ENCODE measurements at regions of chrX and their contacts with region 1.

Region 1: GRCh38 chrX:19682712-19683331 is 167.5 kb upstream of the MAP3K15 start:
- DNase-seq: peak; percentile 83 to 92 (median 85)
- H3K4me3 ChIP-seq: no peak overlapping the region
- H3K4me3 Mint-ChIP-seq: peak overlapping the region; percentile 12 to 75 (median 59)
- H3K27ac ChIP-seq: peak overlapping the region; percentile 92
- H3K27ac Mint-ChIP-seq: peak overlapping the region; percentile 95 to 100 (median 98)
- H3K4me1 ChIP-seq: peaks cover 89% of the 10 kb centered on the region
- H3K4me1 Mint-ChIP-seq: peaks cover 55 to 84% (median 72%) of the 10 kb centered on the region in 4 donors
- H3K27me3 ChIP-seq: no peaks in the 10 kb centered on the region
- H3K27me3 Mint-ChIP-seq: no peaks in the 10 kb centered on the region

Region 2: DNA sequence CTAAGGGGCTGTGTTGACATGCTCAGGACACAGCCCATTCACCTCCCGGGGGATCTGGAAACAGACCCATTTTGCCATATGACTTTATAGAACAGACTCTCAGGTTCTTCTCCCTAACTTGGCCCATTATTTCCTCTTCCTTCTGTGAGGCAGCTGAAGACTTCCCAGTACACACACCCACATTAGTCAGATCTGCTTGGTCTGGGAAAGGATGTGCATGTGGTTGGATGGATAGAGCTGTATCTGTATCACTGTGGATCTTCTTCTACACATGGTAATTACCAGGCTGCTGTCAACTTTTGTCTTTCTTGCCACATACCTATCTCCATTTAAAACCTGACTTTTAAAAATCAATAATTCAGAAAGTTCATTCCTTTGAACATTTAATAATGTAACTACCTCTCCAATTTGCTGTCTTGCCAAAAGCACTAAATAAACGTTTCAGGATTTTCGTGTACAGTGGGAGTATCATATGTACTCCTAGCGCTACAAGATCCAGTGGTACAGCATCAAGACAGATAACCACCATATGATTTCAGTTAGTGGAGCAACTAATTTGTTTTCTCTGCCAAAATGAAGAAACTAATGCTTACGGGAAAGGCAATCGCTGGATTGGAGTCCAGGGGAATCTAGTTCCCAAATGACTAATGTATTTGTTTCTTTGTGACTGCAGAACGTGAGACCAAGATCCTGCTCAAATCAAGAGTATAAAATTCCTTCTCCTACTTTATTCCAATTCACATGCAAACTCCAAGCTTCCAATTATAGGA is 33.4 kb before region 1 on chrX:
- CTCF ChIA-PET with region 1: no interaction called
- POLR2A ChIA-PET with region 1: no interaction called
- intact Hi-C with region 1: loop called (anchors 5 kb)
- DNase-seq: no peak
- H3K4me3 ChIP-seq: no peak overlapping the region
- H3K4me3 Mint-ChIP-seq: no peak overlapping the region
- H3K27ac ChIP-seq: no peak overlapping the region
- H3K27ac Mint-ChIP-seq: peak overlapping the region in 6 of 7 donors; percentile 10 to 90 (median 65)
- H3K4me1 ChIP-seq: peaks cover 21% of the 10 kb centered on the region
- H3K4me1 Mint-ChIP-seq: peaks cover 40 to 83% (median 64%) of the 10 kb centered on the region in 4 donors
- H3K27me3 ChIP-seq: no peaks in the 10 kb centered on the region
- H3K27me3 Mint-ChIP-seq: no peaks in the 10 kb centered on the region

Region 3: DNA sequence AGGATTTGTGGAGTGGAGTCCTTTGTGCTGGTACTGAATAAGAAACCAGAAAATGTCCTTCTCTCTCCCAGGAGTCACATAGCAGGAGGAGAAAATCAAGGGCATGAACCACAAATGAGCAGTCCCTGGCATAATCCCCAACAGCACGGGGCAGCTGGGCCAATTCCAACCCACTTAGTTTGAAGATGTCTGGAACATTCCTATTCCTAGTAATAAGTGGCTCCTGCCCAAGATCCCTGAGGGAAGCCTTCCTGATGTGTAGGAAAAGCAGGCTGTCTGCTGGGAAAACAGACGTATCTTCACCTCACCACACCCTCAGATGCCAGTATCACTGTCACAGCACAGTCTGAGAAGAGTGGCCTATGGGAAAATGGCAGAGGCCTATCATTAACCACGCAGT is 15.3 kb after region 1 on chrX:
- CTCF ChIA-PET with region 1: no interaction called
- POLR2A ChIA-PET with region 1: no interaction called
- intact Hi-C with region 1: no loop called
- DNase-seq: no peak
- H3K4me3 ChIP-seq: no peak overlapping the region
- H3K4me3 Mint-ChIP-seq: no peak overlapping the region
- H3K27ac ChIP-seq: no peak overlapping the region
- H3K27ac Mint-ChIP-seq: peak overlapping the region in 2 of 7 donors; percentile 61 to 83
- H3K4me1 ChIP-seq: peaks cover 35% of the 10 kb centered on the region
- H3K4me1 Mint-ChIP-seq: peaks cover 24 to 61% (median 45%) of the 10 kb centered on the region in 4 donors
- H3K27me3 ChIP-seq: no peaks in the 10 kb centered on the region
- H3K27me3 Mint-ChIP-seq: no peaks in the 10 kb centered on the region

Region 4: DNA sequence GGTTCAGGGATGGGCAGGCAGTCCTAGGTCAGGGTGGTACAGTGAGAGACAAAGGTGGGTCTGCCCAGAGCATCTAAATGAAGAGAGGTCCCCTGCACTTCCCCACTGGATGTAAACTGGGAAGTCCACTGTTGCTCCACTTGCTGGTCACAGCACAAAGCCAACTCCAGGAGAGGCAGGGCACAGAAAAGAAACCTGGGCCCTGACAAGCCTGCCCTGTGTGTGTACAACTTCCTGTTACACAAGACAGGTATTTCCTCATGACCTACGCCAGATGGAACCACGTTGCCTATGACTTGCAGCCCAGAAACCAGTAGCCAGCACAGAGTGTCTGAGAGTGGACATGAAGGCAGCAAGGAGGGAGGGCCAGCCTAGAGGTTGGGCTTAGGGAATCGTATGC is 42.8 kb after region 1 on chrX:
- CTCF ChIA-PET with region 1: no interaction called
- POLR2A ChIA-PET with region 1: no interaction called
- intact Hi-C with region 1: loop called (anchors 5 kb)
- DNase-seq: peak in 2 of 5 donors; percentile 21 to 47
- H3K4me3 ChIP-seq: no peak overlapping the region
- H3K4me3 Mint-ChIP-seq: peak overlapping the region in 7 of 8 donors; percentile 10 to 57 (median 39)
- H3K27ac ChIP-seq: peak overlapping the region; percentile 9
- H3K27ac Mint-ChIP-seq: peak overlapping the region; percentile 43 to 95 (median 77)
- H3K4me1 ChIP-seq: peaks cover 73% of the 10 kb centered on the region
- H3K4me1 Mint-ChIP-seq: peaks cover 30 to 80% (median 61%) of the 10 kb centered on the region in 4 donors
- H3K27me3 ChIP-seq: no peaks in the 10 kb centered on the region
- H3K27me3 Mint-ChIP-seq: no peaks in the 10 kb centered on the region

Region 5: DNA sequence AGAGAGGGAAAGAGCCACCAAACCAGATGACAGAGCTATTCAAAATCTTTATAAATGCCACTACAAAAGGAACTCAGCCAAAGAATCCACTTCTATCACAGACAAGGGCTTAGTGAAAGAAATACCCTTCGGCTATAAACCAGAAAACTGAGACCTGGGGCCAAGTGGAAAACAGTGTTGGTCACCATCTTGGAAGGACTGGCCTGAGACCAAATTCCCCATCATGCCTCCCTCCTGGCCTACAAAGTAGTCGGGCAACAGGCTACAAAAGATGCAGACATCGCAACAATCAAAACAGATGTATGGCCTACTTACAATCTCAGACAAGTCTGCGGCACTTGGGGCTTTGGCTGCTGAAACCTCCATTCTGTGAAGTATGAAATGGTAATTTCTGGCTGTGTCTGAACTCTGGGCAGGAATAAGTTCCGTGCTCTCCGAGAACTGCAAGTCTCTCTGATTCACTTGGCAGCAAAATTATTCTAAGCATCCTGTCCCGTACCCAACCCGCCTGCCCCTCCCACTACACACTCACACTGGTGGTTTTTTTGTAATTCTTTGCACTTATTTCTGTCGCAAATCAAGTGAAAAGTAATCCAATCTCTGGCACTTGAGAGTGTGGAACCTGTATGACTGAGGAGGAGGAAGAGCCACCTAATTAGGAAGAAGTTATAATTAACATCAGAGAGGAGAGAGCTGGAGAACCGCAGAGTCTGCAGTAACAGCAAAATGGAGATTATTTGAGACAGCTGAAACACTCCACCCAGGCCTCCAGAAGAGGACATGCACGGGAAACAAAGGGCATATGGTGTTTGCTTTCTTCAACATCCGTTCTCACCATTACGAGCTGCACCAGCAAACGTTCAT is 116.7 kb after region 1 on chrX:
- CTCF ChIA-PET with region 1: no interaction called
- POLR2A ChIA-PET with region 1: interaction called, 3 read pairs
- intact Hi-C with region 1: loop called (anchors 5 kb)
- DNase-seq: peak; percentile 64 to 76 (median 72)
- H3K4me3 ChIP-seq: peak overlapping the region; percentile 55 to 68
- H3K4me3 Mint-ChIP-seq: peak overlapping the region; percentile 90 to 96 (median 93)
- H3K27ac ChIP-seq: peak overlapping the region; percentile 68
- H3K27ac Mint-ChIP-seq: peak overlapping the region; percentile 88 to 98 (median 95)
- H3K4me1 ChIP-seq: peaks cover 67% of the 10 kb centered on the region
- H3K4me1 Mint-ChIP-seq: peaks cover 38 to 81% (median 51%) of the 10 kb centered on the region in 4 donors
- H3K27me3 ChIP-seq: no peaks in the 10 kb centered on the region
- H3K27me3 Mint-ChIP-seq: no peaks in the 10 kb centered on the region